Uterus (tissue), 4 donors: ENCODE measurements at regions of chr19 and their contacts with region 1.

Region 1: GRCh38 chr19:2021453-2022140 is 6.1 kb upstream of the BTBD2 start:
- DNase-seq: no peak
- H3K4me3 ChIP-seq: no peak overlapping the region
- H3K27ac ChIP-seq: no peak overlapping the region
- H3K4me1 ChIP-seq: no peaks in the 10 kb centered on the region
- H3K27me3 ChIP-seq: no peaks in the 10 kb centered on the region
- CTCF ChIP-seq: no peak
- POLR2A ChIP-seq: no peak

Region 2: DNA sequence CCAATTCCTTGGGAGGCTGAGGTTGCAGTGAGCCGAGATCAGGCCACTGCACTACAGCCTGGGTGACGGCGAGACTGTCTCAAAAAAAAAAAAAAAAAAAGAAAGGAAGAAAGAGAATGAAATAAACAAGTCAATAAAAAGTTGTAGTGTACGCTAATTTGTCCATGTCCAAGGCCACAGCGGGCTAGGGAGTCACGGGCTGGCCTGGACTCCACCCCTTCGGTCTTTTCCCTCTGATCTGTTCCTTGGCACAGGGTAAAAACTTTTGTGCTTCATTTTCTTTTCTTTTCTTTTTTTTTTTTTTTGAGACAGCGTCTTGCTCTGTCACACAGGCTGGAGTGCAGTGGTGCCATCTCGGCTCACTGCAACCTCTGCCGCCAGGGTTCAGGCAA is 48.8 kb after region 1 on chr19:
- intact Hi-C with region 1: loop called (anchors 2 kb)
- DNase-seq: no peak
- H3K4me3 ChIP-seq: no peak overlapping the region
- H3K27ac ChIP-seq: peak overlapping the region; percentile 56 to 58
- H3K4me1 ChIP-seq: peaks cover 0 to 8% of the 10 kb centered on the region in 2 donors
- H3K27me3 ChIP-seq: no peaks in the 10 kb centered on the region
- CTCF ChIP-seq: no peak
- POLR2A ChIP-seq: no peak